ENCODE measurements at regions of chr21 and their contacts with region 1.

Region 1: DNA sequence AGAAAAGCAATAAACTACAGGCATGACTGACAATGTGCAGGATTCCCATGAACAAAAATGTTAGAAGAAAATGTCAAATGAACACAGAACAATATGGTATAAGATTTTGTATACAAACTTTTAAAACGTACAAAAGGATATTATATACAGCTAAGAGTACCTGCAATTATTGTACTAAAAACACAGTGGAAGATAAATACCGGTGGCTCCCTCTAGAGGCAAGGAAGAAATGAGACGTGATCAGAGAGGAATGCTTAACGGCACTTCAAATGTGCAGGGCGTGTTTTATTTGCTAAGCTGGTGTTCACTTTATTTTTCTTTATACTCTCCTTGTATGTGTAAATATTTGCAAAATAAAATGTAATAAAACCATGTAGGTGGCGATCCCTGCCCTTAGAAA is 191.8 kb upstream of the SAMSN1 start:
- H3K4me3 Mint-ChIP-seq: no peak overlapping the region
- H3K27ac Mint-ChIP-seq: peak overlapping the region; percentile 43
- H3K4me1 Mint-ChIP-seq: peaks cover 25% of the 10 kb centered on the region
- H3K27me3 Mint-ChIP-seq: no peaks in the 10 kb centered on the region

Region 2: DNA sequence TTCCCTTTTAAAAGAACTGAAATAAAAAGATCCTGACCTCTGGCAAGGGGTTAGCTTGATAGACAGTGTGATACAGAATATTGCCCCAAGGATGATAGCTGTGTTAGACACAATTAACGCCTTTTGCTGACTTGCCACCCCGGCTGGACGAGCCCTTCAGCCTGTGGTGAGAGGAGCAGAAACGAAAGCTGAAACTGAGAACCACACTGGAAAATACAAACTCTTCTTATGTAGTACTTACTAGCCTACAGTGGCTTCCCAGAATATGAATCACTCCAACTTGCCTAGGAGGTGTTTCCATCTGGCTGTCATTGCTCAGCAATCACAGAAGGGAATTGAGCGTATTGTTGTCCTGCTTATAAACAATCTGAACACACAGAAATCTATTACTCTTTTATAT is 214.7 kb before region 1 on chr21:
- intact Hi-C with region 1: loop called (anchors 5 kb)
- H3K4me3 Mint-ChIP-seq: peak overlapping the region; percentile 65
- H3K27ac Mint-ChIP-seq: peak overlapping the region; percentile 85
- H3K4me1 Mint-ChIP-seq: peaks cover 36% of the 10 kb centered on the region
- H3K27me3 Mint-ChIP-seq: no peaks in the 10 kb centered on the region

Region 3: GRCh38 chr21:14686466-14687267 is 51.3 kb before region 1 on chr21:
- intact Hi-C with region 1: loop called (anchors 5 kb)
- H3K4me3 Mint-ChIP-seq: no peak overlapping the region
- H3K27ac Mint-ChIP-seq: peak overlapping the region; percentile 90
- H3K4me1 Mint-ChIP-seq: peaks cover 87% of the 10 kb centered on the region
- H3K27me3 Mint-ChIP-seq: no peaks in the 10 kb centered on the region